ENCODE measurements at regions of chr1 and their contacts with region 1.

Region 1: DNA sequence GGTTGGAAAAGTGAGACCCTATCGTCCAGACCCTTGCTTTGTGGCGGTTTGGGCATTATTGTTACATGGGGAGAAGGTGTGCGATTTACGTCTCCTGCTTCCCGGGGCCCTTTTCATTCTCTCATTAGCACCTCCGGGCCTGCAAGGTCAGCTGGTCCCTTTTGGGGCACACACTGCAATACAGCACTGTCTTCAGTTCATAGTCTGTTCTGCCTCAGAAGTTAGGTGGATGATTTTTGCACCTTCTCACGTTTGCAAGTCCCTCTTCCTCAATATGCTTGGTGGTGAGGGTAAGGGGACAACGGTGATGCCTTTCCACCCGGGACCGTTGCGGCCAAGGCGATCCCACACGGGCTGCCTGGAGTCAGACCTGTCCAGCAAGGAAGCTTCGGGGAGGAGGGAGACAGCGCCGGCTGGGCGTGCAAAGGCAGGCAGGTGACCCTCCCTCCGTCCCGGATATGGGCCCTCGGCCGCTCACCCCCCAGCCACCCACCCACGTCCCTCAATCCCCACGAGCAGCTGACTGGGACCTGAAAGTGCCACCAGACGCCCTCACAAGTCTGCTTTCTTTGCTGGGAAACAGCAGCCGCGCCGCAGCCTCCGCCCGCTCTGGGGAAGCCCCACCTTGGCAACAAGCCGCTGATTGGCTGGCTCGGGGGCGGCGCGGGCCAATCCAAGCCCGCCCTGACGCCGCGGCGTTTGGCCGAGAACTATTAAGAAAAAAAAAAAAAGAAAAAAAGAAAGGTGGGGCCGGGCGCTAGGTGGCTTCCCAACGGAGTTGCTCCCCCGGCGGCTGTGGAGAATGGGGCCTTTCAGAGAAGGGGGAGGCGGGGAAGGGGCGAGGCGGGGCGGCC is 21.7 kb downstream of the BTG2 start:
- DNase-seq: peak; percentile 91 to 96 (median 94)
- ATAC-seq: peak; percentile 72 to 75
- H3K4me3 Mint-ChIP-seq: peak overlapping the region; percentile 77 to 94 (median 86)
- H3K27ac Mint-ChIP-seq: peak overlapping the region; percentile 96 to 100 (median 98)
- H3K4me1 Mint-ChIP-seq: peaks cover 32 to 65% (median 62%) of the 10 kb centered on the region in 4 donors
- H3K27me3 Mint-ChIP-seq: no peaks in the 10 kb centered on the region

Region 2: DNA sequence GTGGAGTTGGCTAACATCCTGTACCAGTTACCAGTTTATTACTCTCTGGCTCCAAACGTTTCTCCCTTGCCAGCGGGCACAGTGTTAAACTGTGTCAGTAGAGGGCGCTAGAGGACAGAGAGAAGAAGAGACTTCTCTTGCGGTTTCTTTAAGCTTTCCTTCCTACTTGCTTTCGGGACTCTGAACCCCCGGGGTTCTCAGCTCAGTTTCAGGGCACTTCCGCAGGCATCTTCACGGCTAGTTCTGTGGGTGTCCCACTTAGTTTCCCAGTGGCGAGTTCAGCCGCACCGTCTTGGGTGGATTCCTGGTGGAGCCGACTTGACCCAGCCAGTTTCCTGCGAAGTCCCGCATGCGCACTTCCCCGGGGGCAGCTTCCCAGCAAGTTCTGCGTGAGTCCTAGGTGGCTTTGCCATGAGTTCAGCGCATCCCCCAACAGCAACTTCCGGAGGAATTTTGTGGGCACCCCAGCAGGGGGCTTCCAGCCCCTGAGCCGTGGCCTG is 59.7 kb before region 1 on chr1:
- POLR2A ChIA-PET with region 1: interaction called, 730 read pairs
- DNase-seq: peak; percentile 52 to 93 (median 82)
- ATAC-seq: peak; percentile 58 to 69
- H3K4me3 Mint-ChIP-seq: peak overlapping the region; percentile 82 to 94 (median 90)
- H3K27ac Mint-ChIP-seq: peak overlapping the region; percentile 78 to 95 (median 93)
- H3K4me1 Mint-ChIP-seq: peaks cover 12 to 35% (median 23%) of the 10 kb centered on the region in 4 donors
- H3K27me3 Mint-ChIP-seq: no peaks in the 10 kb centered on the region

Region 3: GRCh38 chr1:203273206-203273868 is 53.7 kb before region 1 on chr1:
- POLR2A ChIA-PET with region 1: interaction called, 730 read pairs
- DNase-seq: peak; percentile 79 to 95 (median 91)
- ATAC-seq: peak; percentile 65 to 69
- H3K4me3 Mint-ChIP-seq: peak overlapping the region; percentile 70 to 87 (median 78)
- H3K27ac Mint-ChIP-seq: peak overlapping the region; percentile 75 to 94 (median 92)
- H3K4me1 Mint-ChIP-seq: peaks cover 13 to 72% (median 55%) of the 10 kb centered on the region in 4 donors
- H3K27me3 Mint-ChIP-seq: no peaks in the 10 kb centered on the region

Region 4: DNA sequence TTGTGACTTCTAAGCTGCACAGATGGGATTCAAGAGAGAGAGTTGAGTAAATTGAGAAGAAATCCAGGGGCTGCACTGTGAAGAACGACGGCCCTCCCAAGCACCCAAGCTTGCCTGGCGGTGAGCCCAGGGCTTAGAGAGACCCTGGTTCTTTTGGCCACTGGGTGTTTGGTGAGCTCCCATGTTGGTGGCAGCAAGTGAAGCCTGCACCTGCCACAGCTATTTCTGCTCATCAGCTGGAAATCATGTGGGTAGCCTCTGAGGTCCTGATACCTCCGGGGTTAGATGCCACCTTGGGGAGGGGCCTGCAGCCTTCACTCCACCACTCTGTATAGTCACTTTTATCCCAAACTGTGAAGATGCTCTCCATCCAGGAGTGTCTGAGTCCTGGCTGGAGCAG is 27.9 kb before region 1 on chr1:
- POLR2A ChIA-PET with region 1: interaction called, 20 read pairs
- DNase-seq: peak in 1 of 10 donors; percentile 61
- ATAC-seq: peak in 1 of 2 donors; percentile 29
- H3K4me3 Mint-ChIP-seq: no peak overlapping the region
- H3K27ac Mint-ChIP-seq: peak overlapping the region in 8 of 10 donors; percentile 1 to 83 (median 48)
- H3K4me1 Mint-ChIP-seq: peaks cover 35 to 84% (median 60%) of the 10 kb centered on the region in 4 donors
- H3K27me3 Mint-ChIP-seq: no peaks in the 10 kb centered on the region

Region 5: GRCh38 chr1:203304919-203305808 is 21.9 kb before region 1 on chr1 and contains the start of gene BTG2:
- POLR2A ChIA-PET with region 1: interaction called, 1,045 read pairs
- DNase-seq: peak; percentile 89 to 96 (median 91)
- ATAC-seq: peak; percentile 75 to 82
- H3K4me3 Mint-ChIP-seq: peak within 1 kb of the TSS; percentile 94 to 99 (median 98)
- H3K27ac Mint-ChIP-seq: peak within 1 kb of the TSS; percentile 98 to 100 (median 99)
- H3K4me1 Mint-ChIP-seq: peaks cover 49 to 68% (median 60%) of the 10 kb centered on the region in 4 donors
- H3K27me3 Mint-ChIP-seq: no peaks in the 10 kb centered on the region
- polyA plus RNA-seq, gene BTG2: 91.8 to 179 (median 122) TPM

Region 6: DNA sequence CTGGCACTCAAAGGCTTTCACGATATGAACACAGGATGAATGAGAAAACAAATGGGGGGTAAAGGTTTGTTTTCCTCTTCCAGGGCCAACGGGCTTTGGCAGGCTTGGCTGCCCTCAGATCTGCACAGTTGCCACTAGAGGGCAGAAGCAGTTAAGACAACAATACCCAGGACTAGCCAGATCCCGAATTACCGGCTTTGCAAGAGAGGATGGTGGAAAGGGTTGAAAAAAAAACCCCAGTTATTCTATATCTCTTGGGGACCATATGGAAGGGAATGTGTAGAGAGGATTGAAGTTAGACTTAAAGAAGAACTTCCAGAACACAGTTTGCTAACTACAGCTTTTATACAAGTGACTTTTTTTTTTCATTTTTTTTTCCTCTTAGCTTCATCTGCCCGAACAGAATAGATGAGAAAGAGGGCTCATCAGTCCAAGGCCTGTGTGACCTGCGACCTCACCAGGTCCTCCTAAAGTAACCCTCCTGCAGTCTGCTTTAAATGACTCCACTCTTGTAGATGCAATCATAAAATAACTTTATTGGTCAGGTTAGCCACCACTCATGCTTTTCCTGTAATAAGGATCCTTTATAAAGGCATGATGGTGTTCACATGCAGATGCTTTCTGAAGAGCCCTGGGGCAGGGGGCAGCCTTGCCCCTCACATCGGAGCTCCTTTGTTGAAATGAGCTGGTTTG is 13.2 kb after region 1 on chr1:
- POLR2A ChIA-PET with region 1: interaction called, 144 read pairs
- DNase-seq: peak; percentile 22 to 77 (median 50)
- ATAC-seq: peak; percentile 69 to 80
- H3K4me3 Mint-ChIP-seq: peak overlapping the region in 1 of 10 donors; percentile 11
- H3K27ac Mint-ChIP-seq: peak overlapping the region in 7 of 10 donors; percentile 4 to 67 (median 33)
- H3K4me1 Mint-ChIP-seq: peaks cover 22 to 39% (median 34%) of the 10 kb centered on the region in 4 donors
- H3K27me3 Mint-ChIP-seq: peaks cover 0 to 28% (median 6%) of the 10 kb centered on the region in 5 donors

Region 7: GRCh38 chr1:203381151-203381751 is 54.2 kb after region 1 on chr1:
- POLR2A ChIA-PET with region 1: no interaction called
- DNase-seq: no peak
- ATAC-seq: no peak
- H3K4me3 Mint-ChIP-seq: peak overlapping the region in 1 of 10 donors; percentile 41
- H3K27ac Mint-ChIP-seq: peak overlapping the region in 1 of 10 donors; percentile 64
- H3K4me1 Mint-ChIP-seq: peaks cover 0 to 23% (median 0%) of the 10 kb centered on the region in 4 donors
- H3K27me3 Mint-ChIP-seq: peaks cover 10 to 30% (median 15%) of the 10 kb centered on the region in 5 donors

Region 8: GRCh38 chr1:203402629-203403337 is 75.7 kb after region 1 on chr1:
- POLR2A ChIA-PET with region 1: no interaction called
- DNase-seq: no peak
- ATAC-seq: no peak
- H3K4me3 Mint-ChIP-seq: no peak overlapping the region
- H3K27ac Mint-ChIP-seq: no peak overlapping the region
- H3K4me1 Mint-ChIP-seq: peaks cover 0 to 3% (median 0%) of the 10 kb centered on the region in 4 donors
- H3K27me3 Mint-ChIP-seq: peaks cover 9 to 32% (median 23%) of the 10 kb centered on the region in 5 donors